ENCODE measurements at regions of chr7 and their contacts with region 1.

Region 1: DNA sequence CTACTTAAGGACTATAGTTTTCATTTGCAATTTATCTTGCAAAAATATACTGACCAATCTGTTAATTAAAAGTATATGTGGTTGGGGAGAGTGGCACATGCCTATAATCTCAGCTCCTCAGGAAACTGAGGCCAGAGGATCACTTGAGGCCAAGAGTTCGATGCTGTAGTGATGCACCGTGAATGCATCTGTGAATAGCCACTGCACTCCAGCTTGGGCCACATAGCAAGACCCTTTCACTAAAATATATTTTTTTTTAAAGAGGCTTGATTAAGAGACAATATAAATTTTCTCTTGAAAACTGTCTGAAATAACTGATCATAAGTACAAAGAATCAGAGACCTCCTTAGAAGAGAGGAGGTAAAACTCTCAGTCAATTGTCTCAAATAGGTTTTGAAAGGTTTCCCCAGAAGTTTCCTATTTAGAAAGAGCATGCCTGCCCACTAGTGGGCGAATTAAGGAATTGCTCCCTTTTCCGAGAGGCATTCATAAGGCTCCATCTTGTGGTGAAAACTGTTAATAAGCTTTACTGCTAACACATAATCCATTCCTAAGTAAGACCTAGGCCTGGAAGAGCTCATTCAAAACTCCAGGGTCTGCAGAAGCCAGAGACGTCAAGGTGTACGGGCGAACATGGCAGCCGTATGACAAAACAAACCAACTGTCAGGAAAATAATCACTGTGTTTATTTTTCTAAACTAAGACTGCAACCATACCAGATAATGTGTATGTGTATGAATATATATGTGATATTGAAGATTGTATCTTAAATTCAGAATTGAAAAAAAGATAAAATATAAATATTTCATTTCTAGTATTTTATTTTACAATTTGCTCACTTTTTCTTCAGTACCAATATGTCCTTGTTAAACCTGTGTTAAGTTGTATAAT is 6.8 kb upstream of the TAS2R40 start:
- DNase-seq: peak in 2 of 4 donors; percentile 74 to 84
- ATAC-seq: peak; percentile 100
- H3K4me3 ChIP-seq: no peak overlapping the region
- H3K27ac ChIP-seq: no peak overlapping the region
- H3K4me1 ChIP-seq: no peaks in the 10 kb centered on the region
- H3K27me3 ChIP-seq: no peaks in the 10 kb centered on the region
- CTCF ChIP-seq: peak; percentile 98 to 100

Region 2: DNA sequence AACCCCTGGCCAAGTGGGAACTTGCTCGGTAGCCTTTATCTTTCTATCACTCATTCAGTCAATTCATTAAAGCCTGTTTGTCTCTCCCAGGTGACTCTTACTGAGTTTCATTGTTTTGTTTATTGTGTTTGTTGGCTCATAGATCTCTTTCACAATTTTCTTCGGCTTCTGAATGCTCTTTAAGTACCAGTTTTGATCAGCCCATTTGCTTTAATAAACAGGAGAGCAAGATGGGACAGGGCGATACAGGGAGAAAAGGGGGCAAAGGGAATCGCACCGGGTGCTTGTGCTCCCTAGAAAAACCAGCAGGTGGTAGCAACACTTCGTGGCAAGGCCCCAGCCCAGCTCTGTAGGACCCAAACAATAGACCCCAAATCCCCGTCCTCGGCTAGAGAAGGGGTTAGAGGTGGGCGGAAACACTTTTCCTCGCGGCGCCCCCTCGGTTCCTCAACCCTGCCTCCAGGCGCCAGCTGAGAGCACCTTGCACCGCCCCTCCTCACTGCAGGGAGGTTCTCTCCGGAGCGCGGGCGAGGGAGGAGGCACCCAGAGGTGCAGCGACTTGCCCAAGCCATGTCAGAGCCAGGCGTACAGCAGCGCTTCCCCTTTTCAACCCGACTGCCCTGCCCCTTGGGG is 361.2 kb before region 1 on chr7:
- intact Hi-C with region 1: loop called in 1 of 2 experiments (anchors 10 kb)
- DNase-seq: peak; percentile 68 to 94 (median 80)
- ATAC-seq: peak; percentile 85
- H3K4me3 ChIP-seq: peak overlapping the region; percentile 67 to 68
- H3K27ac ChIP-seq: peak overlapping the region; percentile 53 to 77
- H3K4me1 ChIP-seq: peaks cover 0 to 24% of the 10 kb centered on the region in 2 donors
- H3K27me3 ChIP-seq: peaks cover 0 to 12% of the 10 kb centered on the region in 2 donors
- CTCF ChIP-seq: peak; percentile 68 to 70